OCI-LY7 (cell line): ENCODE measurements at regions of chr3 and their contacts with region 1.

Region 1: DNA sequence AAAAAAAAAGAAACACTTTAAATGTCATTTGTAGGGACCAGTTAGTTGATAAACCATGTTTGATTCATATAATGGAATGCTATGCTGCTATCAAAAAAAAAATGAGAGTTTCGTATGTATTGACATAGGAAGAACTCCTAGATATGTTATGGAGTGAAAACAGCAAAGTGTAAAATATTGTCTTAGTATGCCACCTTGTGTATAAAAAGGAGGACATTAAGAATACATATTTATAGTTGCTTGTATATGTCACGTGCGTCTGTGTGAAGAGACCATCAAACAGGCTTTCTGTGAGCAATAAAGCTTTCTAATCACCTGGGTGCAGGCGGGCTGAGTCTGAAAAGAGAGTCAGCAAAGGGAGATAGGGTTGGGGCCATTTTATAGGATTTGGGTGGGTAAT is 39.5 kb downstream of the KBTBD8 start:
- DNase-seq: peak; percentile 50
- H3K4me3 ChIP-seq: no peak overlapping the region
- H3K27ac ChIP-seq: no peak overlapping the region
- H3K4me1 ChIP-seq: peaks cover 8% of the 10 kb centered on the region
- CTCF ChIP-seq: peak; percentile 69

Region 2: DNA sequence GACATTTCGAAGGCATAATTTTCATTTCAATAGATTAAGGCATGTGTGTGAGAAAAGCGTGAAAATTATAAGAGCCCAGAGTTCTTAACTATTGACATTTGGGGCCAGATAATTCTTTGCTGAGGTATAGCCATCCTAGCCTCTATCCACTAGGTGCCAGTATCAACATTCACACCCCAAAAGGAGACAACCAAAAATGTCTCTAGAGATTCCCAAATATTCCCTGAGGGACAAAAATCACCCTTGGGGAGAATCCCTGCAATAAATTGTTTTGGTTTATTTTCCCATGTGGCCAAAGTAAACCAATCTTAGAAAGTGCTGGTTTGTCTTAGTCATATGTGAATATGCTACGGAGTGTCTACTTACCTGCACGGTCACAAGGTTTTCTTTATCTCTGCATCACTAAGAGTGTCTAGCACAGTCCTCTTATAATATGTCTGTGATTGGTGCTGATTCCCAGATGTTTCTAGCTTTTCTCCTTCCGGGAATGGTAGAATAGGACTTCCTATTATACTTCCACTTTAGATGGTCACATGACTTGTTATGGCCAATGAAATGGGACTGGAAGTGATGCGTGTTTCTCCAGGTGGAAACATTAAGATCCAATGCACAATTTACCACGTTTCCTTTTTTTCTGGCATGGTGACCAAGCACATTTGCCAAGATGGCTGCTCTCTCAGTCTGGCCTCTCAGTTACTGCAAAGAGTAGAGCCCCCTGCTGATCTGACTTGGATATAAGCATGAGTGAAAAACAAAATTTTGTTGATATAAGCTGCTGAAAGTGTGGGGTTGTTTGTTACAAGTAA is 47.6 kb before region 1 on chr3:
- CTCF ChIA-PET with region 1: interaction called, 3 read pairs
- POLR2A ChIA-PET with region 1: interaction called, 6 read pairs
- intact Hi-C with region 1: loop called (anchors 1 kb)
- DNase-seq: peak; percentile 71
- H3K4me3 ChIP-seq: peak overlapping the region; percentile 61
- H3K27ac ChIP-seq: peak overlapping the region; percentile 52
- H3K4me1 ChIP-seq: peaks cover 10% of the 10 kb centered on the region
- CTCF ChIP-seq: peak; percentile 88

Region 3: GRCh38 chr3:66998113-66998903 is 39.3 kb before region 1 on chr3 and contains the start of gene KBTBD8:
- CTCF ChIA-PET with region 1: interaction called, 3 read pairs
- POLR2A ChIA-PET with region 1: interaction called, 20 read pairs
- intact Hi-C with region 1: no loop called
- DNase-seq: peak; percentile 99
- H3K4me3 ChIP-seq: peak within 1 kb of the TSS; percentile 92
- H3K27ac ChIP-seq: peak within 1 kb of the TSS; percentile 18
- H3K4me1 ChIP-seq: peaks cover 44% of the 10 kb centered on the region
- CTCF ChIP-seq: no peak
- total RNA-seq, gene KBTBD8: 16.4 and 18.4 TPM in 2 replicates

Region 4: DNA sequence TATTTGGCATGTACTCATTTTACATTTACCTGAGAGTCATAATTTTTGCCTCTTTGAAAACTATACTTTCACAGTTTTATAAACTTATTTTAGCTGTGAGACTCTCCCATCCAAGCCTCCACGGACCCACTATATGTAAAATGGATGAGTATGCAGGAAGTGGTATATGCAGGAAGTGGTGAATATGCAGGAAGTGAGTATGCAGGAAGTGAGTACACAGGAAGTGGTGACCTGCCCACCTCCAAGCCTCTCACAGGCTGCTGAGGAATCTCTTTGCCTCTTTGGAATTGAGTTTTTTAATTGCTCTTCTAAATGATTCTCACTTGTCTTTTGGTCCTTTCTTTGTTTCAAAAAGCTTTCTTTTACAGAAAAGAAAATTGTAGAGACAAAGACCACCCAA is 45.7 kb after region 1 on chr3:
- CTCF ChIA-PET with region 1: no interaction called
- POLR2A ChIA-PET with region 1: no interaction called
- intact Hi-C with region 1: no loop called
- DNase-seq: peak; percentile 76
- H3K4me3 ChIP-seq: peak overlapping the region; percentile 43
- H3K27ac ChIP-seq: peak overlapping the region; percentile 24
- H3K4me1 ChIP-seq: peaks cover 14% of the 10 kb centered on the region
- CTCF ChIP-seq: no peak